ENCODE measurements at regions of chr18 and their contacts with region 1.

Region 1: DNA sequence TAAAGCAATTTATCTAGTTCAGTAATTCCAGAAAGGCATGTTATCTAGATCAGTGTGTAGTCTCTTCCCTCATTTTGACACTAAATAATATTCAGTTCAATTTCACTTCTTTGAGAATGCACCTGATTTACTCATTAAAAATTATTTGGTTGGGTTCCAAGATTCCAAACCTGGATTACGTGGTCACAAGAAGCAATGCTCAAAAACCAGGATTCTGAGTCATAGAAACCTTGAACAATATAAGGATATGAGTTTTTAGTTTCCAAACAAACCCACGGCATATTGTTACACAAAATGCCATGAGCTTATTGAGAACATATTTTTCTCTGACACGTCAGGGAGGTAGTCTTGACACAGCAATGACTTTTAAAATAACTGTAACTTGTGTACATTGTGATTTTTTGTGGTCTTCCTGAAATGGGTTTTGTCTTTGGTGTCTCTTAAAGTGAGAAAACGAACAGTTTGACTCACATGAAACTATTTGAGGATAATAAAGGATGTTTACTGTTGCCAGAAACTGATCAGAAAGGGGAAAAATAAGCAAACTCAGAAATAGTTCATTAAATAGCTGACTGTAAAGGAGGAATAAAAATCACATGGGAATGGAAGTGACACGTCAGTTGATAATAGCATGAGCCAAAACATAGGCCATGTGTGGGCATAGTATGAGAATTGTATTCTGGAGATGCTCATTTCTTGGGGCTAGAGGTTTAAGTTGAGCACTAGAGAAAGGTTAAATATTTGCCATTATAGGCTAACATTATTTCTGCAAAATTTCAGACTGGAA is 617.7 kb upstream of the CDH2 start:
- DNase-seq: peak in 1 of 2 experiments; percentile 68
- H3K4me3 ChIP-seq: no peak overlapping the region
- H3K27ac ChIP-seq: peak overlapping the region; percentile 46
- H3K4me1 ChIP-seq: peaks cover 19% of the 10 kb centered on the region
- H3K27me3 ChIP-seq: no peaks in the 10 kb centered on the region
- CTCF ChIP-seq: no peak

Region 2: DNA sequence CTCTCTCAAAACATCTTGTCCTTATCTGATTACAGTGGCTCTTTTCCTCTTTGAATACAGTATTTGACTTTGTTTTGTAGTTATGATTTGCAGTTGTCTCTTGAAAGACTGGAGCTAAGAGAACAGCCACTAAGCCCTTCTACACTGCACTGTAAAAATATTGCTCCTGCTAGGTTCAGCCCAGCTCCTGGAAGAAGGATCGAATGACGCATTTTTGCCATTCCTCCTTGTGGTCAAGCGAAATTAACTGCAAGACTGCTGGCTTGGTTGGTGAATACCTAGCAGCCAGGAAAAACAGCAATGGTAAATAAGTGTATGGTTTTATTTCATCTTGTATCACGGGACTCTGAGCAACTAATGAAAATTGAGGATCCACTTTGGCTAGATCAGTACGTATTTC is 209.9 kb before region 1 on chr18:
- CTCF ChIA-PET with region 1: no interaction called
- POLR2A ChIA-PET with region 1: no interaction called
- intact Hi-C with region 1: loop called (anchors 10 kb)
- DNase-seq: peak in 1 of 2 experiments; percentile 37
- H3K4me3 ChIP-seq: no peak overlapping the region
- H3K27ac ChIP-seq: no peak overlapping the region
- H3K4me1 ChIP-seq: no peaks in the 10 kb centered on the region
- H3K27me3 ChIP-seq: no peaks in the 10 kb centered on the region
- CTCF ChIP-seq: no peak

Region 3: DNA sequence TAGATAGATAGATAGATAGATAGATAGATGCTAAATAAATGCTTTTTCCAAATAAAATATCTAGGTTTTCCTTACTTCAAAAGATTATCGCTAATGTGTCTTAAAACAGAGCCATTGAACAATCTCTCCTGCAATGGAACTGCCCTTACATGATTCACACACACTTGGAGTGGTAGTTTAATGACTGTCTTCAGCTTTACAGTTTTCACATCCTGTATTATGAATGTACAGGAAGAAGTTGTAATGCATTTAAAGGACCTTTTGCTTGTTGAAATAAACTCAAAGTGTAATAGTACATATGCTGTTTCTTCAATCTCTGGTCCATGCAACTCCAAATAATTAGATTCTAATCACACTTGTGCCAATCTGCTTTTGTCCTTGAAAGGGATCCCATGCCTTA is 179.9 kb after region 1 on chr18:
- CTCF ChIA-PET with region 1: no interaction called
- POLR2A ChIA-PET with region 1: no interaction called
- intact Hi-C with region 1: no loop called
- DNase-seq: no peak
- H3K4me3 ChIP-seq: no peak overlapping the region
- H3K27ac ChIP-seq: no peak overlapping the region
- H3K4me1 ChIP-seq: no peaks in the 10 kb centered on the region
- H3K27me3 ChIP-seq: no peaks in the 10 kb centered on the region
- CTCF ChIP-seq: no peak

Measured in PC-9 (cell line).